ENCODE measurements at regions of chr1 and their contacts with region 1.

Region 1: GRCh38 chr1:174159252-174160108 is at the start of gene RABGAP1L:
- DNase-seq: peak; percentile 93
- ATAC-seq: peak; percentile 87
- H3K4me3 Mint-ChIP-seq: peak within 1 kb of the TSS; percentile 98
- H3K27ac Mint-ChIP-seq: peak within 1 kb of the TSS; percentile 99
- H3K4me1 Mint-ChIP-seq: peaks cover 61% of the 10 kb centered on the region
- H3K27me3 Mint-ChIP-seq: no peaks in the 10 kb centered on the region
- CTCF ChIP-seq: no peak
- total RNA-seq, gene RABGAP1L: 26.9 to 29.4 TPM

Region 2: DNA sequence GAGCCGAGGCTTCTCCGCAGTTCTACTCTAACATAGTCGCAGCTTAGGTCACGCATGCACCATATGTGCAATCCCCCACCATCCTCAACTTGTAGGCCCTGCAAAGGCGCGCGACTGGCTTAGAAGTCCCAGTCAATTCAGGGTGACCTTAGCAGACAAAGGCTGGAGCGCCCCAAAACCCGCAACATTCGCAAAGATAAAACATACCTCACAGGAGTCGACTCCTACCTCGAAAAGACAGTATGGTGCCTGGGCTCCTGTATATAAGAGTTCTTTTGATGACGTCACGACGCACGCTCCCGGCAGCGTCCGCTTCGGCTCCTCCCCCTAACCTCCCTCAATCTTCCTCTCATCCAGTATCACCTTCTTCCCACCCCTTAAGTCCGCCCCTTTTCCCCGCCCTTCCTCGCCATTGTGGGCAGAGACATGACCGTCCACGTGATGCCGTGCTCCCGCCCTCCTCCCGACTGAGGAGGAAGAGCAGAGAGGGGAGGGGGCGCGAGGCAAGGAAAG is 291.7 kb before region 1 on chr1 and contains the start of gene GAS5:
- CTCF ChIA-PET with region 1: no interaction called
- POLR2A ChIA-PET with region 1: interaction called, 4 read pairs
- intact Hi-C with region 1: loop called (anchors 5 kb)
- DNase-seq: peak; percentile 100
- ATAC-seq: peak; percentile 80
- H3K4me3 Mint-ChIP-seq: peak within 1 kb of the TSS; percentile 95
- H3K27ac Mint-ChIP-seq: peak within 1 kb of the TSS; percentile 97
- H3K4me1 Mint-ChIP-seq: peaks cover 52% of the 10 kb centered on the region
- H3K27me3 Mint-ChIP-seq: no peaks in the 10 kb centered on the region
- CTCF ChIP-seq: no peak
- total RNA-seq, gene GAS5: 1,276 to 1,298 TPM

Region 3: DNA sequence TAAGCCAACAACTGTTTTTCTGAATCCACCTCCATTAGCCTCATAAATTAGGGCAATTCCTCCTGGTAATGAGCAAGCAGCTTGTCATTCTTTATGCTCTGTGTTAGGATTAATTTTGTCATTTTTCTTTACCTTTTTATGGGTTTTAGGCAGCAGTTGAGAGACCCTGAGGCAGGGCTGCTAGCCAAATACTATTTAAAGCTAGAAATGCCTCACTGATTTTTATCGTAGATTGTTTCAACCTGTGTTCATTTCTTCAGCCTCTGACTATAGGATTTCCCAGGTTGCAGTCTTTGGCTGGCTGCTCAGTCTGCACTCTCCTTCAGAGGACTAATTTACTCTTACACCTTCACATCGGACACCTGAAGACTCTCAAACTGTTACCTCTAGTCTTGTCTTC is 62.1 kb before region 1 on chr1:
- CTCF ChIA-PET with region 1: no interaction called
- POLR2A ChIA-PET with region 1: no interaction called
- intact Hi-C with region 1: loop called (anchors 10 kb)
- DNase-seq: no peak
- ATAC-seq: no peak
- H3K4me3 Mint-ChIP-seq: no peak overlapping the region
- H3K27ac Mint-ChIP-seq: no peak overlapping the region
- H3K4me1 Mint-ChIP-seq: no peaks in the 10 kb centered on the region
- H3K27me3 Mint-ChIP-seq: peaks cover 1% of the 10 kb centered on the region
- CTCF ChIP-seq: no peak

Region 4: DNA sequence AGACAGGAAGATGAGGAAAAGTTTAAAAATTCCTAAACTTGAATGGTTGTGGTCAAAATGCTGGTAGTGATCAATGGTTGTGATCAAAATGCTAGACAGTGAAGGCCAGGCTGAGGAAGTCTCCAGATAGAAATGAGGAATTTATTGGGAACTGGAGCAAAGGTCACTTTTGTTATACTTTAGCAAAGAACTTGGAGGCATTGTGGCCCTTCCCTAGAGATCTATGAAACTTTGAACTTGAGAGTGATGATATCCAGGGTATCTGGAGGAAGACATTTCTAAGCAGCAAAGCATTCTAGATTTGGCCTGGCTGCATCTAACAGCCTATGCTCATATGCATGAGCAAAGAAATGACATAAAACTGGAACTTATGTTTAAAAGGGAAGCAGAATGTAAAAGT is 35.6 kb before region 1 on chr1:
- CTCF ChIA-PET with region 1: no interaction called
- POLR2A ChIA-PET with region 1: no interaction called
- intact Hi-C with region 1: loop called (anchors 5 kb)
- DNase-seq: no peak
- ATAC-seq: no peak
- H3K4me3 Mint-ChIP-seq: no peak overlapping the region
- H3K27ac Mint-ChIP-seq: no peak overlapping the region
- H3K4me1 Mint-ChIP-seq: no peaks in the 10 kb centered on the region
- H3K27me3 Mint-ChIP-seq: no peaks in the 10 kb centered on the region
- CTCF ChIP-seq: no peak

Region 5: DNA sequence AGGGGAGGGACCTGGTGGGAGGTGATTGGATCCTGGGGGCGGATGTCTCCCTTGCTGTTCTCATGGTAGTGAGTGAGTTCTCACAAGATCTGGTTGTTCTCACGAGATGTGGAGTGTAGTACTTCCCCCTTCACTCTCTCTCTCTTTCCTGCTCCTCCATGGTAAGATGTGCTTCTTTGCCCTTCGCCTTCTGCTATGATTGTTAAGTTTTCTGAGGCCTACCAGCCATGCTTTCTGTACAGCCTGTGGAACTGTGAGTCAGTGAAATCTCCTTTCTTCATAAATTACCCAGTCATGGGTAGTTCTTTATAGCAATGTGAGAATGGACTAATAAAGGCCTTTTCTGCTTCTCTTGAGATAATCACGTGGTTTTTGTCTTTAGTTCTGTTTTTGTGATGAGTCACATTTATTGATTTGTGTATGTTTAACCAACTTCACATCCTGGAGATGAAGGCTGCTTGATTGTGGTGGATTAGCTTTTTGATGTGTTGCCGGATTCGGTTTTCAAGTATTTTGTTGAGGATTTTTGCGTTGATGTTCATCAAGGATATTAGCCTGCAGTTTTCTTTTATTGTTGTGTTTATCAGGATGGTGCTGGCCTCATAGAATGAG is 45.3 kb after region 1 on chr1:
- CTCF ChIA-PET with region 1: interaction called, 3 read pairs
- POLR2A ChIA-PET with region 1: interaction called, 3 read pairs
- intact Hi-C with region 1: loop called (anchors 5 kb)
- DNase-seq: peak; percentile 22
- ATAC-seq: peak; percentile 69
- H3K4me3 Mint-ChIP-seq: peak overlapping the region; percentile 50
- H3K27ac Mint-ChIP-seq: peak overlapping the region; percentile 85
- H3K4me1 Mint-ChIP-seq: peaks cover 56% of the 10 kb centered on the region
- H3K27me3 Mint-ChIP-seq: no peaks in the 10 kb centered on the region
- CTCF ChIP-seq: no peak

Measured in activated CD8-positive, alpha-beta T cell treated with anti-CD3 and anti-CD28 coated beads for 36 hours (primary cell).